Mucosa of descending colon (tissue), 3 donors: ENCODE measurements at regions of chr6 and their contacts with region 1.

Region 1: DNA sequence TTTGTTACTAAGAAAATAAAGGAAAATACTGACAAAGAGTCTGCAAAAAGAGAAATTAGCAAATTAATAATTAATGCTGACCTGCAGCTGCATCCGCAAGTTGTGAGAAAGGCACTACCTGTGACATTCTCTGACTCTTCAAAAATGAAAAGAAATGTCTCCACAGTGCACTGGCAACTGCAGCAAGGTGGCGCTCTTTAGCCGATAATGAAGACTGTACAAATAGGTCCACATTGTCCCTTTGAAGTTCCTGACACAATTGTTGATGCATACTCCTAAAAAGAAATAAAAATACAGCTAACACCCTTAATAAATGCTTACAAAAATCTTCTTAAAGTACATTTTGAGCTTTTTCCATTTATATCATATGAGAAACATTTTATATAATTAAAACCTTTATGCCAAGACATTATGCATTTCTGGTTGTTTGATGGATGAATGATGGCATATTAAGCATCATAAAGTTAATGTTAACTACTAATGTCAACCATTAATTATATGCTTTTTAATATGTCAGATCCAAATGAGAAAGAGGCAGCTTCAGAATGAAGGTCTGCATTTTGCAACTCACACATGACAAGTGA is 96.5 kb downstream of the MMS22L start:
- DNase-seq: peak in 2 of 3 donors; percentile 60 to 90
- ATAC-seq: peak; percentile 81
- H3K4me3 ChIP-seq: no peak overlapping the region
- H3K4me1 ChIP-seq: no peaks in the 10 kb centered on the region
- CTCF ChIP-seq: peak; percentile 72

Region 2: GRCh38 chr6:97322811-97323210 is 136.3 kb after region 1 on chr6:
- intact Hi-C with region 1: no loop called
- DNase-seq: no peak
- ATAC-seq: no peak
- H3K4me3 ChIP-seq: no peak overlapping the region
- H3K4me1 ChIP-seq: no peaks in the 10 kb centered on the region
- CTCF ChIP-seq: no peak

Region 3: GRCh38 chr6:97394160-97394748 is 207.7 kb after region 1 on chr6:
- intact Hi-C with region 1: loop called in 1 of 2 experiments (anchors 5 kb)
- DNase-seq: peak in 1 of 3 donors; percentile 80
- ATAC-seq: peak; percentile 92
- H3K4me3 ChIP-seq: no peak overlapping the region
- H3K4me1 ChIP-seq: no peaks in the 10 kb centered on the region
- CTCF ChIP-seq: peak; percentile 88